MCF 10A (cell line): ENCODE measurements at regions of chr5 and their contacts with region 1.

Region 1: GRCh38 chr5:132790201-132790865 is 13.3 kb upstream of the SEPTIN8 start:
- DNase-seq: no peak
- H3K4me3 Mint-ChIP-seq: no peak overlapping the region
- H3K27ac Mint-ChIP-seq: no peak overlapping the region
- H3K4me1 Mint-ChIP-seq: no peaks in the 10 kb centered on the region
- H3K27me3 Mint-ChIP-seq: no peaks in the 10 kb centered on the region
- CTCF ChIP-seq: no peak

Region 2: DNA sequence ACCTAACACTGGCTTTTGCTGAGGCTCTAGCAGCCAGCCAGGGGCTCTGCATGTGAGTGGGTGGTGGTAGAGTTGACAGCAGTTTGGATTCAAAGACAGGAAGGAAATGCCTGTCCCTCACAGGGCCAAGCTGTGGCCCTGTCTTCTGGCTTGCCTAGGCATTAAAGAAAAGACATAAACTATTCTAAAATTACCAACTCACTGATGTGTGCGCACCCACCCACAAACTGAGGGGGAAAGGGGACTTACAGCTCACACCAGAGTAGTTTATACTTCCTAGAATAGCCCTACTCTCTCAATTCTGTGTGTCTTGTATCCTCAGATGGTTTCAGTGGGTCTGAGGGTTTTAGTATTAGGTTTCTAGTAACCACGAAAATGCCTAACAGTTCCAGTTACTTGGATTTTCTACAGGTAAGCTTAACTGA is 150.6 kb before region 1 on chr5:
- CTCF ChIA-PET with region 1: no interaction called
- POLR2A ChIA-PET with region 1: no interaction called
- intact Hi-C with region 1: loop called (anchors 5 kb)
- DNase-seq: no peak
- H3K4me3 Mint-ChIP-seq: no peak overlapping the region
- H3K27ac Mint-ChIP-seq: no peak overlapping the region
- H3K4me1 Mint-ChIP-seq: no peaks in the 10 kb centered on the region
- H3K27me3 Mint-ChIP-seq: no peaks in the 10 kb centered on the region
- CTCF ChIP-seq: no peak

Region 3: DNA sequence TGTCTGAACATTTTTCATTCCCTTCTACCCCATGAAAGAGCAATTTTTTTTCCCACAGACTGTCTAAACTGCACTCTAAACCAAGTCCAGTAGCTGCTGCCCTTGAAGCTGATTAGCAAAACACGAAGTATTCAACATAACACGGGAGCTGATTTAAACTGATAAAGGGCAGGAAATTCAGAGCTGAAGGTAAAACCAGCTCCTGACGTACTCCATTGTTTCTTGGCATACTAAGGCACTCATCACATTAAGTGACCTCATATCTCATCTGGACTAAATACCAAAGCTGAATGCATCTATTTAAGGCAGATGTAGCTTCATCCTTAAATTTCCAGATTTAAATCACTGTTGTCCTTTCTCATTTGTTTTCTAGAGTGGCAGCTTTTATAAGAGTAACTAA is 64.0 kb after region 1 on chr5:
- CTCF ChIA-PET with region 1: no interaction called
- POLR2A ChIA-PET with region 1: no interaction called
- intact Hi-C with region 1: no loop called
- DNase-seq: no peak
- H3K4me3 Mint-ChIP-seq: no peak overlapping the region
- H3K27ac Mint-ChIP-seq: no peak overlapping the region
- H3K4me1 Mint-ChIP-seq: no peaks in the 10 kb centered on the region
- H3K27me3 Mint-ChIP-seq: peaks cover 13% of the 10 kb centered on the region
- CTCF ChIP-seq: no peak

Region 4: GRCh38 chr5:133123297-133123696 is 333.0 kb after region 1 on chr5:
- CTCF ChIA-PET with region 1: no interaction called
- POLR2A ChIA-PET with region 1: no interaction called
- intact Hi-C with region 1: no loop called
- DNase-seq: no peak
- H3K4me3 Mint-ChIP-seq: no peak overlapping the region
- H3K27ac Mint-ChIP-seq: no peak overlapping the region
- H3K4me1 Mint-ChIP-seq: no peaks in the 10 kb centered on the region
- H3K27me3 Mint-ChIP-seq: no peaks in the 10 kb centered on the region
- CTCF ChIP-seq: no peak